Dorsolateral prefrontal cortex (tissue), 120 donors: ENCODE measurements at regions of chr6 and their contacts with region 1.

Region 1: GRCh38 chr6:144215932-144216667 is 65.8 kb downstream of the STX11 start:
- DNase-seq: peak; percentile 72 to 95 (median 92)
- H3K4me3 ChIP-seq: peak overlapping the region; percentile 60 to 94 (median 78)
- H3K27ac ChIP-seq: peak overlapping the region; percentile 86 to 100 (median 96)
- H3K27me3 ChIP-seq: no peaks in the 10 kb centered on the region
- CTCF ChIP-seq: peak in 52 of 56 donors; percentile 21 to 77 (median 54)

Region 2: DNA sequence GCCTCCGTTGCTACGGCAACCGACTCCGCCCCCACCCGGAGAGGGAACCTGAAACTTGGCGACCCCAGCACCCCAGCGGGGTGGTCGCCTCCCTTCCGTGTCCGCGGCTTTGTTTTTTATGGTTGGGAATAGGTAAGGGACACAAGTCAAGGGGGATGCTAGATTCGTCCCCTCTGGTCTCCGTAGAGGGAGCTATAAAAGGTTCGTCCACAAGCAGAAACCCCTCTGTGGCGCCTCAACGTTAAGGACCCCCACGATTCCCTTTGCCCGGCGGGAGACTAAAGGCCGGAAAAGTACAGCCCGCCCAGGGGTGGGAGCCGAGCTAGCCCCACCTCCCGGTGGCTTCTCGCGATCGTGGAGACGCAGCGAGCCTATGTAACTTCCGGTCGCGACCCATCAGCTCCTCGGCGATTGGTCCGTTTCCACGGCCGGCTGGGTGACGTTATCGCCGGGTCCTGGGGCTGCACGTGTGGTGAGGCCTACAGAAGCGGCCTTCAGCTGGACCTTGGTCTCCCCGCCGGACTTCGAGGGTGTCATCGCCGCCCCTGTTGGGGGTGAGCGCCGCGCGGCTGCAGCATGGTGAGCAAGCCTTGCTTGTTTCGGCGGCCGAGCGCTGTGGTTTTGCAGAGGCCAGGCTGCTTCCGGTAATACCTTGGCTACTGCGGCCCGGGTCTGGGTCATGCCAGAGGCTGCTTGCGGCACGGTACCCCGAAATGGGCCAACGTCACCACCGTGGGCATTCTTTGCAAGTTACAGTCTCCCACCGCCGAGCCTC is 373.0 kb before region 1 on chr6 and contains the start of gene LTV1:
- intact Hi-C with region 1: loop called in 1 of 2 experiments (anchors 10 kb)
- DNase-seq: peak; percentile 94 to 99 (median 97)
- H3K4me3 ChIP-seq: peak within 1 kb of the TSS; percentile 50 to 99 (median 90)
- H3K27ac ChIP-seq: peak within 1 kb of the TSS; percentile 62 to 98 (median 93)
- H3K27me3 ChIP-seq: no peaks in the 10 kb centered on the region
- CTCF ChIP-seq: peak in 33 of 56 donors; percentile 10 to 53 (median 35)
- total RNA-seq, gene LTV1: 8.2 to 21.6 (median 13.4) TPM

Region 3: GRCh38 chr6:144104898-144105487 is 111.1 kb before region 1 on chr6:
- intact Hi-C with region 1: loop called in 1 of 2 experiments (anchors 2 kb)
- DNase-seq: no peak
- H3K4me3 ChIP-seq: no peak overlapping the region
- H3K27ac ChIP-seq: no peak overlapping the region
- H3K27me3 ChIP-seq: peaks cover 0 to 9% (median 0%) of the 10 kb centered on the region in 45 donors
- CTCF ChIP-seq: peak; percentile 41 to 88 (median 70)

Region 4: GRCh38 chr6:144285798-144286502 is 69.8 kb after region 1 on chr6:
- intact Hi-C with region 1: loop called in 1 of 2 experiments (anchors 2 kb)
- DNase-seq: peak in 6 of 10 donors; percentile 36 to 59 (median 42)
- H3K4me3 ChIP-seq: peak overlapping the region; percentile 55 to 85 (median 74)
- H3K27ac ChIP-seq: peak overlapping the region in 56 of 59 donors; percentile 8 to 97 (median 82)
- H3K27me3 ChIP-seq: peaks cover 0 to 22% (median 0%) of the 10 kb centered on the region in 45 donors
- CTCF ChIP-seq: no peak

Region 5: GRCh38 chr6:145734486-145735355 is 1518.6 kb after region 1 on chr6:
- intact Hi-C with region 1: loop called in 1 of 2 experiments (anchors 10 kb)
- DNase-seq: peak; percentile 69 to 89 (median 82)
- H3K4me3 ChIP-seq: peak overlapping the region; percentile 58 to 89 (median 81)
- H3K27ac ChIP-seq: peak overlapping the region; percentile 72 to 98 (median 94)
- H3K27me3 ChIP-seq: no peaks in the 10 kb centered on the region
- CTCF ChIP-seq: peak in 7 of 56 donors; percentile 9 to 22 (median 16)